ENCODE measurements at regions of chr9 and their contacts with region 1.

Region 1: DNA sequence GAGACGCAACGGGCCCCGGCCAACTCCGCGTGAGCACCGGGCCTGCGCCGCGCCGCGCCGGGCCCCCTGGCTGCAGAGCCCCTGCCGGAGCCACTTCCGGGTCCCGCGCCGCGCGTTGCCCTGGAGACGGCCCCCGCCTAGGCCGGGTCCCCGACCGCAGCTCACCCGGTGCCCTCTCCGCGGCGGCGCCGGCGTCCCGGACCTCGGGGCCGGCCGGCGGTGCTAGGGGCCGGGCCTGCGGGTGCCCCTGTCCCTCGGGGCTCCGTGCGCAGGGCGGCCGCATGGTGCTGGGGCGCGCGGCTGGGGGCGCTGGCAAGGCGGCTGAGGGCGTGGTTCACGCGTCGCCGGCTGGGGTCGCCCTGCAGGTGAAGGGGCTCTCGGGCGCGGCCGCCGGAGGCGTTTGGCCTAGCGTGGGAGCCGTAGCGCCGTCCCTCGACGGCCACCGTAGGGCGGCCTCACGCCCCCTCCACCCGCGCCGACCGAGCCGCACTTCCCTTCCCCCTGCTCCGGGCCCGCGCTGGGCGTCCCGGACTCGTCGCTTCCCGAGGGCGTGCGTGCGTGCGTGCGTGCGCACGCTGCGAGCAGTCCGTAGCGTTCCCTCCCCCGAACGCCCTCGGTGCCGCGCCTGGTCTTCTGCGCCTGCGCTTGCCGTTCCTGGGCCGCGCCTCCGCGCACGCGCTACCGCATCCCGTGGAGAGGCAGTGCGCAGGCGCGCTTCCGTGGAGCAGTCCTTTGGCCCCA is at the start of gene TMEM250:
- ATAC-seq: peak; percentile 64 to 88 (median 83)
- H3K4me3 ChIP-seq: peak within 1 kb of the TSS; percentile 75 to 98 (median 77)
- H3K27ac ChIP-seq: peak within 1 kb of the TSS; percentile 91 to 93
- H3K4me1 ChIP-seq: peaks cover 17% of the 10 kb centered on the region in 2 donors
- total RNA-seq, gene TMEM250: 11.3 to 37.9 (median 21.0) TPM

Region 2: DNA sequence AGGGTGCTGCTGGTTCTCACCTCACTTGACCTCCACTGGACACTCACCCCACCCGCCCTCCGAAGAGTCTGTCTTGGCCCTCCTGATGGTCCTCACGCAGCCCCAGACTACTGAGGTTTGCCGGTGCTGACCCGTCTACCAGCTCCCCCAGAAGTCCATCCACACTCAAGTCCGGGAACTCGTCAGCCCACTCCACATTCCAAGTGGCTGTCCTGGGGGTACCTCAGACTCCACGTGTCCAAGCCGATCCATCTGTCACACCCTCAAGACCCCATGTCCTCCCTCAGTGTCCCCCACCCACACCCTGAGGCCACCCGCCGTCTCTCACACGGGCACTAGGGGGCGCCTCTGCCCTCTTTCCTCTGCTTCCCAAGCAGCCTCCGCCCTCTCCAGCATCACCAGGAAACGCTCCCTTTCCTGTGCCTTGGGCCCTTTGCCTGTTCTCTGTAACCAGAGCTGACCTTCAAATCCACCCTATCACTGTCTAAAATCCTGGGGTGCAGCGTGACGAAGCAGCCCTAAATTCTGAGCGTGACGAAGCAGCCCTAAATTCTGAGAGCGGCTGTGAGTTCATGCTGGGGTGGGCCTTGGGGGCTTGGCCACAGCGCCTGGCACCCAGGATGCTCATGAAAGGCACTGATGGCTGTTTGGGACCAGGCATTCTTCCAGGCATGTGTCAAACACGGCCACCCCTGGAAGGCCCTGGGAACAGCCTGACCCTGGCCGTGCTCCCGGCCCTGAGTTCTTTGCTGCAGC is 320.8 kb before region 1 on chr9:
- in situ Hi-C with region 1: no loop called
- ATAC-seq: peak; percentile 56 to 88 (median 78)
- H3K4me3 ChIP-seq: no peak overlapping the region
- H3K27ac ChIP-seq: no peak overlapping the region
- H3K4me1 ChIP-seq: peaks cover 0 to 3% of the 10 kb centered on the region in 2 donors

Region 3: DNA sequence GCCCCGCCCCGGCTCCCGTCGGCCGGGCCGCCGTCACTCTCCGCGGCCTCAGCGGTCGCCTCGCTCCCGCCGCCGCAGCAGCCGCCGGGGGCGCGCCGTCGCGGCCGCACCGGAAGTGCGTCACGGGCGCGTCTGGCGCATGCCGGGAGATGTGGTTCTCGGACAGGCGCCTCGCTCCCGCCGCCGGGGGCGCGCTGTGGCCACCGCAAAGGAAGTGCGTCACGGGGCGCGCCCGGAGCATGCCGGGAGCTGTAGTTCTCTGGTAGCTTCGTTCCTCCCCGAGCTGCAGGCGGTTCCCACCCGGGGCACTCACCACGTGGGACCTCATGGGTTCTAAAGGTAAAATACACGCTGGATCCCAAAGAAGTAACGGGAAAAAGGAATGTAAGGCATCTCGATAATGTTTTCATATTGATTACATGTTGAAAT is 157.2 kb before region 1 on chr9 and contains the start of gene UBAC1:
- in situ Hi-C with region 1: loop called in 8 of 9 experiments (anchors 10 to 25 kb)
- ATAC-seq: peak; percentile 89 to 96 (median 92)
- H3K4me3 ChIP-seq: peak within 1 kb of the TSS; percentile 72 to 82 (median 73)
- H3K27ac ChIP-seq: peak within 1 kb of the TSS; percentile 15 to 48
- H3K4me1 ChIP-seq: peaks cover 18 to 19% of the 10 kb centered on the region in 2 donors
- total RNA-seq, gene UBAC1: 23.2 to 41.9 (median 29.5) TPM